B cell (primary cell): ENCODE measurements at regions of chr16 and their contacts with region 1.

Region 1: GRCh38 chr16:29700253-29700987 is 21.4 kb downstream of the QPRT start:
- DNase-seq: peak; percentile 80
- ATAC-seq: peak; percentile 16
- H3K4me3 ChIP-seq: no peak overlapping the region
- H3K4me3 Mint-ChIP-seq: peak overlapping the region; percentile 60
- H3K27ac ChIP-seq: no peak overlapping the region
- H3K27ac Mint-ChIP-seq: peak overlapping the region; percentile 82
- H3K4me1 ChIP-seq: peaks cover 24 to 33% of the 10 kb centered on the region in 2 donors
- H3K4me1 Mint-ChIP-seq: peaks cover 30% of the 10 kb centered on the region
- H3K27me3 ChIP-seq: no peaks in the 10 kb centered on the region
- H3K27me3 Mint-ChIP-seq: no peaks in the 10 kb centered on the region
- CTCF ChIP-seq: peak; percentile 84

Region 2: DNA sequence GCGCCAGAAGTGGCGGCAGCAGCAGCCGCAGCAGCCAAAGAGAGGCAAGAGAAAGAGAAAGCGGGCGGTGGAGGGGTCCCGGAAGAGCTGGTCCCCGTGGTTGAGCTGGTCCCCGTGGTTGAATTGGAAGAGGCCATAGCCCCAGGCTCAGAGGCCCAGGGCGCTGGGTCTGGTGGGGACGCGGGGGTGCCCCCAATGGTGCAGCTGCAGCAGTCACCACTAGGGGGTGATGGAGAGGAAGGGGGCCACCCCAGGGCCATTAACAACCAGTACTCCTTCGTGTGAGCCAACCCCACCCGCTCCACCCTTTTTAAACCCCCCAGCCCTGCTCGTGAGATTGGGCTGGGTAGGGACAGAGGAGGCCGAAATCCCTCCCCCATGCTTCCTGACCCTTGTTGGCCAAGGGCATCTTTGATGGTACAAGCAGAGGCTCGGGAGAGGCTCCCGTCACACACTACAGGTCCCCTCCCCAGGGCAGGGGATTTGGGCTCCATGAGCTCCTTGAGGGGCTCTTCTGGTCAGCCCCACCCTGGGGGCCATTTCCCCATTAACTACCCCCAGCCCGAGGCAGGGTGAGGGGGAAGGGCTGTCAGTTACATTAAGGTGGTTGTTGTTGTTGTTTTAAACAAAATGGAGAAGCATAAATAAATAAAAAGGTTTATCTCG is 826.8 kb before region 1 on chr16:
- CTCF ChIA-PET with region 1: no interaction called
- POLR2A ChIA-PET with region 1: no interaction called
- intact Hi-C with region 1: no loop called
- DNase-seq: peak; percentile 72
- ATAC-seq: peak; percentile 90
- H3K4me3 ChIP-seq: no peak overlapping the region
- H3K4me3 Mint-ChIP-seq: no peak overlapping the region
- H3K27ac ChIP-seq: no peak overlapping the region
- H3K27ac Mint-ChIP-seq: no peak overlapping the region
- H3K4me1 ChIP-seq: no peaks in the 10 kb centered on the region
- H3K4me1 Mint-ChIP-seq: peaks cover under 1% of the 10 kb centered on the region
- H3K27me3 ChIP-seq: no peaks in the 10 kb centered on the region
- H3K27me3 Mint-ChIP-seq: no peaks in the 10 kb centered on the region
- CTCF ChIP-seq: peak; percentile 80

Region 3: DNA sequence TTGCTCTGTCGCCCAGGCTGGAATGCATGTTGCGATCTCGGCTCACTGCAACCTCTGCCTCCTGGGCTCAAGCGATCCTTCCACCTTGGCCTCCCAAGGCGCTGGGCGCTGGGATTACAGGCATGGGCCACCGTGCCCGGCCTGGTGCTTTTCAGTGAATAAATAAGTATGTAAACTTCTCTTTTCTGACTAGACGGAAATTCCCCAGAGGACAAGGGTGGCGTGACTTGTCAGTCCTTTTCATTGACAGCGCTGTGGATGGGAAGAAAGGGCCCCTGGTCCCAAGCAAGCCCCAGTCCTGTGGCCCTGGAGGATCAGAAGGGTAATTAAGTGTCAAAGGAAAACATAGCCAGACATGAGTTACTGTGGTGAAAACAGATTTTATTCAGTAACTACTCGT is 46.9 kb before region 1 on chr16:
- CTCF ChIA-PET with region 1: interaction called, 11 read pairs
- POLR2A ChIA-PET with region 1: no interaction called
- intact Hi-C with region 1: loop called (anchors 5 kb)
- DNase-seq: peak; percentile 82
- ATAC-seq: peak; percentile 90
- H3K4me3 ChIP-seq: no peak overlapping the region
- H3K4me3 Mint-ChIP-seq: peak overlapping the region; percentile 76
- H3K27ac ChIP-seq: no peak overlapping the region
- H3K27ac Mint-ChIP-seq: peak overlapping the region; percentile 83
- H3K4me1 ChIP-seq: peaks cover 11 to 14% of the 10 kb centered on the region in 2 donors
- H3K4me1 Mint-ChIP-seq: peaks cover 13% of the 10 kb centered on the region
- H3K27me3 ChIP-seq: no peaks in the 10 kb centered on the region
- H3K27me3 Mint-ChIP-seq: no peaks in the 10 kb centered on the region
- CTCF ChIP-seq: no peak

Region 4: DNA sequence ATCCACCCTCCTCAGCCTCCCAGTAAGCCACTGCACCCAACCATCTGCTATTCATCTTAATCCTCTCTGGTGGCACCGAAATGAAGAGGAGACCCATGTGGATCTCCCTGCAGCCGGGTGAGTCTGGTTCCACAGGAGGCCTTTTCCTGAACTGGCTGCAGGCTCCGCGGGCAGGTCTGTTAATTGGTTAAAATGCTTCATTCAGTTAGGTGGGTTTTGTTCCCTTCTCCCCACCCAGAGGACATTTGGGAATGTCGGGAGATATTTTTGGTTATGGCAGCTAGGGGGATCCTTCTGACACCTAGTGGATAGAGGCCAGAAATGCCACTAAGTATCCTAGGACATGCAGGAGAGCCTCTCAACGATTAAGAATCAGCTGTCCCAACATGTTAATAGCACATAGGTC is 28.7 kb after region 1 on chr16:
- CTCF ChIA-PET with region 1: interaction called, 43 read pairs
- POLR2A ChIA-PET with region 1: no interaction called
- intact Hi-C with region 1: no loop called
- DNase-seq: peak; percentile 35
- ATAC-seq: peak; percentile 24
- H3K4me3 ChIP-seq: no peak overlapping the region
- H3K4me3 Mint-ChIP-seq: no peak overlapping the region
- H3K27ac ChIP-seq: no peak overlapping the region
- H3K27ac Mint-ChIP-seq: no peak overlapping the region
- H3K4me1 ChIP-seq: peaks cover 8 to 32% of the 10 kb centered on the region in 2 donors
- H3K4me1 Mint-ChIP-seq: peaks cover 24% of the 10 kb centered on the region
- H3K27me3 ChIP-seq: no peaks in the 10 kb centered on the region
- H3K27me3 Mint-ChIP-seq: no peaks in the 10 kb centered on the region
- CTCF ChIP-seq: no peak

Region 5: GRCh38 chr16:29790183-29790952 is 89.9 kb after region 1 on chr16 and contains the start of gene KIF22:
- CTCF ChIA-PET with region 1: interaction called, 25 read pairs
- POLR2A ChIA-PET with region 1: interaction called, 15 read pairs
- intact Hi-C with region 1: loop called (anchors 2 kb)
- DNase-seq: peak; percentile 100
- ATAC-seq: peak; percentile 96
- H3K4me3 ChIP-seq: peak within 1 kb of the TSS; percentile 65 to 93 (median 78)
- H3K4me3 Mint-ChIP-seq: peak within 1 kb of the TSS; percentile 99
- H3K27ac ChIP-seq: peak within 1 kb of the TSS; percentile 75 to 77
- H3K27ac Mint-ChIP-seq: peak within 1 kb of the TSS; percentile 99
- H3K4me1 ChIP-seq: peaks cover 19 to 34% of the 10 kb centered on the region in 2 donors
- H3K4me1 Mint-ChIP-seq: peaks cover 34% of the 10 kb centered on the region
- H3K27me3 ChIP-seq: no peaks in the 10 kb centered on the region
- H3K27me3 Mint-ChIP-seq: no peaks in the 10 kb centered on the region
- CTCF ChIP-seq: peak; percentile 84
- total RNA-seq, gene KIF22: 53.5 and 53.9 TPM in 2 replicates

Region 6: GRCh38 chr16:29848420-29849297 is 148.2 kb after region 1 on chr16:
- CTCF ChIA-PET with region 1: interaction called, 100 read pairs
- POLR2A ChIA-PET with region 1: interaction called, 12 read pairs
- intact Hi-C with region 1: no loop called
- DNase-seq: peak; percentile 75
- ATAC-seq: peak; percentile 79
- H3K4me3 ChIP-seq: no peak overlapping the region
- H3K4me3 Mint-ChIP-seq: no peak overlapping the region
- H3K27ac ChIP-seq: no peak overlapping the region
- H3K27ac Mint-ChIP-seq: no peak overlapping the region
- H3K4me1 ChIP-seq: no peaks in the 10 kb centered on the region
- H3K4me1 Mint-ChIP-seq: no peaks in the 10 kb centered on the region
- H3K27me3 ChIP-seq: no peaks in the 10 kb centered on the region
- H3K27me3 Mint-ChIP-seq: no peaks in the 10 kb centered on the region
- CTCF ChIP-seq: peak; percentile 78

Region 7: GRCh38 chr16:30010844-30011713 is 310.7 kb after region 1 on chr16 and contains the start of gene DOC2A:
- CTCF ChIA-PET with region 1: interaction called, 17 read pairs
- POLR2A ChIA-PET with region 1: interaction called, 4 read pairs
- intact Hi-C with region 1: no loop called
- DNase-seq: peak; percentile 49
- ATAC-seq: peak; percentile 32
- H3K4me3 ChIP-seq: peak within 1 kb of the TSS in 4 of 5 experiments; percentile 29 to 50 (median 44)
- H3K4me3 Mint-ChIP-seq: peak within 1 kb of the TSS; percentile 86
- H3K27ac ChIP-seq: no peak within 1 kb of the TSS
- H3K27ac Mint-ChIP-seq: no peak within 1 kb of the TSS
- H3K4me1 ChIP-seq: peaks cover 16 to 21% of the 10 kb centered on the region in 2 donors
- H3K4me1 Mint-ChIP-seq: peaks cover 14% of the 10 kb centered on the region
- H3K27me3 ChIP-seq: peaks cover 0 to 29% (median 15%) of the 10 kb centered on the region in 4 experiments
- H3K27me3 Mint-ChIP-seq: peaks cover 20% of the 10 kb centered on the region
- CTCF ChIP-seq: no peak
- total RNA-seq, gene DOC2A: not detected in 2 replicates